OCI-LY7 (cell line): ENCODE measurements at regions of chr16 and their contacts with region 1.

Region 1: GRCh38 chr16:1964506-1965395 is at the start of gene RPS2:
- DNase-seq: peak; percentile 99
- H3K4me3 ChIP-seq: peak within 1 kb of the TSS; percentile 82
- H3K27ac ChIP-seq: peak within 1 kb of the TSS; percentile 80
- H3K4me1 ChIP-seq: peaks cover 32% of the 10 kb centered on the region
- CTCF ChIP-seq: 0 out of 2 replicates have a peak, but pooled peaks have one; percentile 34
- total RNA-seq, gene RPS2: 2,266 and 2,461 TPM in 2 replicates

Region 2: DNA sequence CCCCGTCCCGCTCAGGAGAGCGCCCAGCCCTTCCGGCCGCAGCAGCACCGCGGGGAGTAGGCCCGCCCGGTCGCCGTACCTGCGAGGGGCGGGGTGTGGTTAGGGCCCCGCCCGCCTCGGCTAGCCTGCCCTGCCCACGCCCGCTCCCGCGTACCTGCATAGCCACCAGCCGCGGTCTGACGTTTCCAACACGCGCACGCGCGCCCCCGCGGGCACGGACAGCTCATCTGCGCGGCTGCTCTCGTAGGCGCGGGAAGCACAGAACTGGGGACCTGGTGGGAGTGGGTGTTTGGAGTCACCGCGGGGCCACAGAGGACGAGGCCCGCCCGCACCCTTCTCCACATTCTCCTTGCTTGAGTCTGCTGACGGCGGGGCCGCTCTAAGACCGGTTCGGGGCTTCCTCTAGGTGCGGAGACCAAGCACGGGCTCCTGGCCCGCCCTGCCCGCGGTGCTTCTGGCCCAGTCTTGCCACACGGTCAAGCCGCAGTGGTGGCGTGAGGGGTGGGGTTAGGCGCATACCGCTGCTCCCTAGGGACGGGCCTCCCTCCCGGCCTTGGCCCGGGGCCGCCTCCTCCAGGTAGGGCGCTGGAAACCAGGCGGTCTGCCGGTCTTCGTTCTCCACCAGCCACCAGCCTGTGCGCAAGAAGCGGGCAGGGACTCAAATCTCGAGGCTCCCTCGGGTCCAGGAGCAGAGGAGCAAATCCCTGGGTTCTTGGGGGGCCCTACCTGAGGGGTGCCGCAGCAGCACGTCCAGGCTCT is 14.7 kb after region 1 on chr16:
- CTCF ChIA-PET with region 1: no interaction called
- POLR2A ChIA-PET with region 1: no interaction called
- intact Hi-C with region 1: no loop called
- DNase-seq: no peak
- H3K4me3 ChIP-seq: no peak overlapping the region
- H3K27ac ChIP-seq: no peak overlapping the region
- H3K4me1 ChIP-seq: peaks cover 4% of the 10 kb centered on the region
- CTCF ChIP-seq: no peak

Region 3: GRCh38 chr16:1991948-1992703 is 27.4 kb after region 1 on chr16:
- CTCF ChIA-PET with region 1: no interaction called
- POLR2A ChIA-PET with region 1: interaction called, 5 read pairs
- intact Hi-C with region 1: loop called (anchors 2 kb)
- DNase-seq: peak; percentile 95
- H3K4me3 ChIP-seq: peak overlapping the region; percentile 68
- H3K27ac ChIP-seq: peak overlapping the region; percentile 50
- H3K4me1 ChIP-seq: peaks cover 36% of the 10 kb centered on the region
- CTCF ChIP-seq: no peak